ENCODE measurements at regions of chr9 and their contacts with region 1.

Region 1: GRCh38 chr9:110340314-110340713 is 2.7 kb upstream of the TXNDC8 start:
- DNase-seq: no peak
- H3K4me3 ChIP-seq: no peak overlapping the region
- H3K27ac ChIP-seq: no peak overlapping the region
- H3K27me3 ChIP-seq: peaks cover 2% of the 10 kb centered on the region
- CTCF ChIP-seq: peak; percentile 48

Region 2: GRCh38 chr9:110440172-110440571 is 99.9 kb after region 1 on chr9:
- CTCF ChIA-PET with region 1: no interaction called
- POLR2A ChIA-PET with region 1: no interaction called
- DNase-seq: peak; percentile 84
- H3K4me3 ChIP-seq: no peak overlapping the region
- H3K27ac ChIP-seq: no peak overlapping the region
- H3K27me3 ChIP-seq: no peaks in the 10 kb centered on the region
- CTCF ChIP-seq: no peak

Region 3: GRCh38 chr9:110452227-110452801 is 112.0 kb after region 1 on chr9:
- CTCF ChIA-PET with region 1: interaction called, 13 read pairs
- POLR2A ChIA-PET with region 1: no interaction called
- DNase-seq: no peak
- H3K4me3 ChIP-seq: no peak overlapping the region
- H3K27ac ChIP-seq: no peak overlapping the region
- H3K27me3 ChIP-seq: no peaks in the 10 kb centered on the region
- CTCF ChIP-seq: peak; percentile 45

Measured in AG04450 (cell line).